GM18951 (cell line): ENCODE measurements at regions of chr11 and their contacts with region 1.

Region 1: GRCh38 chr11:108713076-108713790 is 48.4 kb downstream of the DDX10 start:
- POLR2A ChIP-seq: no peak

Region 2: GRCh38 chr11:108571001-108571400 is 142.2 kb before region 1 on chr11:
- in situ Hi-C with region 1: no loop called
- POLR2A ChIP-seq: no peak

Region 3: DNA sequence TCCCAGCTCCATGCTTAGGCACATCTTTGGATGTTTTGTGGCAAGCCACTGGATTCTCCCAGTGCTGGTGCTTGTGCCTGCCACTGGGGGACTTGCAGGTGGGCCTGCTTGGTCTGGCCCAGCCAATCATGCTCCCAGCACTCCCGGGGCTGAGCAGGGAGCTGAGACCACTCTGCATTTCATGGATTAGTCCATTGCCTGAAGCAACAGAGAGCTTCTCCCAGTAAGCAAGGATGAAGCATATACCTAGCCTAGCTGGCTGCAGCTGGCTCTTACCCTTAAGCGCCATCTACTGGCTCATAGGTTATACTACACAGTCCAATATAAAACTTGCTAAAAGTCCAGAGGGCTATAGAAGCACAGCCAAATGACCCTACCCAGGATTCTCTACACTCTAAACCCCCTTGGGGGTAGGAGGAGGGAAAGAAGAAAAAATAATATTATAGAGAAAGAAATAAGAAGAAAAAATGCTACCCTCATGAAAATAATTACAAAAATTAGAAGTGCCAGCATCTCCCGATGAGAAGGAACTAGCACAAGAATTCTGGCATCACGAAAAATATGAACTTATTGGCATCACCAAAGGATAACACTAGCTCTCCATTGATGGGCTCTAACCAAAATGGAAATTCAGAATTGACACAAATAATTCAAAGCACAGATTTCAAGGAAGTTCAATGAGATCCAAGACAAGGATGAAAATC is 984.1 kb after region 1 on chr11:
- in situ Hi-C with region 1: loop called (anchors 25 kb)
- POLR2A ChIP-seq: no peak

Region 4: GRCh38 chr11:109845437-109845836 is 1132.2 kb after region 1 on chr11:
- in situ Hi-C with region 1: loop called (anchors 25 kb)
- POLR2A ChIP-seq: no peak